Activated CD4-positive, alpha-beta T cell treated with anti-CD3 and anti-CD28 coated beads for 36 hours (primary cell): ENCODE measurements at regions of chr5 and their contacts with region 1.

Region 1: GRCh38 chr5:173615884-173616576 is 420 bp downstream of the BOD1 start:
- DNase-seq: peak; percentile 84
- ATAC-seq: peak; percentile 63
- H3K4me3 Mint-ChIP-seq: peak overlapping the region; percentile 95
- H3K27ac Mint-ChIP-seq: peak overlapping the region; percentile 83
- H3K4me1 Mint-ChIP-seq: peaks cover 56% of the 10 kb centered on the region
- H3K27me3 Mint-ChIP-seq: no peaks in the 10 kb centered on the region

Region 2: GRCh38 chr5:172958331-172959046 is 657.5 kb before region 1 on chr5:
- CTCF ChIA-PET with region 1: no interaction called
- POLR2A ChIA-PET with region 1: no interaction called
- intact Hi-C with region 1: loop called in 1 of 2 experiments (anchors 1 kb)
- DNase-seq: peak; percentile 83
- ATAC-seq: peak; percentile 76
- H3K4me3 Mint-ChIP-seq: peak overlapping the region; percentile 93
- H3K27ac Mint-ChIP-seq: peak overlapping the region; percentile 94
- H3K4me1 Mint-ChIP-seq: peaks cover 17% of the 10 kb centered on the region
- H3K27me3 Mint-ChIP-seq: no peaks in the 10 kb centered on the region

Region 3: DNA sequence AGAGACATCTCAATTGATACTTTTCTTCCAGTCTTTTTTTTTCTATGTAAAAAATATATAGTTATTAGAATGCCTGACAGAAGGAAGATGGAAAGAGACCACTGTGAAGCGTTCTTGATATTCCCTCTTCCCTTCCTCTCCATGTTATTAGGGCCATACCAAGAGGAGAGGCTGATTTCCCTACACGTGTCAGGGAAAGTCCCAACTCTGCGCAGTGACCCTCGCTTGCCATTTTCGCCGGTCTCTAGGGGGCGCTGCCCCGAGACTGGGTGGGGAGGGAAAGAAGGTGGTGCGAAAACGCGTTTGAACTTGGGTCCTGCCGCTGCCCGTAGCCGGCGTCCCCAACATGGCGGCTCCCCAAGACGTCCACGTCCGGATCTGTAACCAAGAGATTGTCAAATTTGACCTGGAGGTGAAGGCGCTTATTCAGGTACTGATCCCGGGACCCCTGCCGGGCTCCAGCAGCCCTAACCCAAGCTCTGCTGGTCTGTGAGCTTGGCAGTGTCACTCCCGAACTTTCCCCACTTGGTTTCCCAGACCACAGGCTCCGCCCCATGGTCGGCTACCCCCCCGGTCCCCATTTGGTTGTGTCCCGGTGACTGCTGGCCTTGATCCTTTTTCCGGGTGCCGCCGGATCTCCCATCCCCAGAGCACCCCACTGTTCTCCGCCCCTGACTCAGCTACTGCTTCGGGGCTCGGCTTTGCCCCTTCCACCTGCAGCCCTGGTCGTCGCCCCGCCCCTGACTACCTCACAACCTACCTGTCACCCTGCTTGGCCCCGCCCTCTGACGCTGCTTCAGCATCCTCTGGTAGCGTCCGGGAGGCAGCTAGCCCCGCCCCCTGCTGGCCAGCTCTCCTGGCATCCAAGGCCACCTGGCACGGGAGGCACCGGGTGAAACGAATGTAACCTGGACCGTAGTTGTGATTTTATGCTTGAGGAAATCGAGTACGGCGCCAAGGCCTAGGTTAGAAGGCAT is 471.5 kb before region 1 on chr5 and contains the start of gene BNIP1:
- CTCF ChIA-PET with region 1: no interaction called
- POLR2A ChIA-PET with region 1: no interaction called
- intact Hi-C with region 1: loop called in 1 of 2 experiments (anchors 1 kb)
- DNase-seq: peak; percentile 98
- ATAC-seq: peak; percentile 94
- H3K4me3 Mint-ChIP-seq: peak within 1 kb of the TSS; percentile 99
- H3K27ac Mint-ChIP-seq: peak within 1 kb of the TSS; percentile 99
- H3K4me1 Mint-ChIP-seq: peaks cover 10% of the 10 kb centered on the region
- H3K27me3 Mint-ChIP-seq: no peaks in the 10 kb centered on the region
- total RNA-seq, gene BNIP1: 24.2 to 26.8 TPM

Region 4: DNA sequence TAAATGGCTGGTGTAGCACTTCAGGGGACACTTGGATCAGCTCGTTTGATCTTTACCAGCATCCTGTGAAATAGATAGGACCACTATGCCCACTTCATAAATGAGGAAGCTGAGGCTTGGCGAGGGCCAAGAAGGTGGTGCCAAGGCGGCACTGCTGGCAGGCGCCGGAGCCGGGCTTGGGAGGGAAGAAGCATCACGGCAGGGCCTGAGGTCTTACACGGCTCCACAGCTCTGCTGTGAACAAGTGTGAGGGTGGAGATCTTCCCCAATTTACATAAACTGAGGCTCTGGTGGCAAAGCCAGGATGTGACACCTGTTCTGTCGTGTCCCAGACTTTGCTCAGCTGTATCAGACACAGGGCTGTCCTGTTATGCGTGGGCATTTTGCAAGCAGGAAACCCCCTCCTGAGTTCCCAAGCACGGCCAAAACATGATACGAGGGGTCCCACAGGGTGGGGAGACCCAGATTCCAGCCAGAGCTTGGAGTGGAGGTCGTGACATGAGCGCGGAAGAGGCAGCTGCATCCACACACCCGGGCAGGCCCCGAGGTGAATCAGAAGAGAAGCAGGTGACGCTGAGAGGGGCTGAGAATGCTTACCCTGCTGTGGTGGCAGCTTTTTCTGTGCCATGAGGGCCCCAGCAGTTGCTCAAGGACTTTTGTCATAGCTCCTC is 117.9 kb after region 1 on chr5:
- CTCF ChIA-PET with region 1: no interaction called
- POLR2A ChIA-PET with region 1: no interaction called
- intact Hi-C with region 1: no loop called
- DNase-seq: no peak
- ATAC-seq: no peak
- H3K4me3 Mint-ChIP-seq: no peak overlapping the region
- H3K27ac Mint-ChIP-seq: no peak overlapping the region
- H3K4me1 Mint-ChIP-seq: no peaks in the 10 kb centered on the region
- H3K27me3 Mint-ChIP-seq: no peaks in the 10 kb centered on the region

Region 5: DNA sequence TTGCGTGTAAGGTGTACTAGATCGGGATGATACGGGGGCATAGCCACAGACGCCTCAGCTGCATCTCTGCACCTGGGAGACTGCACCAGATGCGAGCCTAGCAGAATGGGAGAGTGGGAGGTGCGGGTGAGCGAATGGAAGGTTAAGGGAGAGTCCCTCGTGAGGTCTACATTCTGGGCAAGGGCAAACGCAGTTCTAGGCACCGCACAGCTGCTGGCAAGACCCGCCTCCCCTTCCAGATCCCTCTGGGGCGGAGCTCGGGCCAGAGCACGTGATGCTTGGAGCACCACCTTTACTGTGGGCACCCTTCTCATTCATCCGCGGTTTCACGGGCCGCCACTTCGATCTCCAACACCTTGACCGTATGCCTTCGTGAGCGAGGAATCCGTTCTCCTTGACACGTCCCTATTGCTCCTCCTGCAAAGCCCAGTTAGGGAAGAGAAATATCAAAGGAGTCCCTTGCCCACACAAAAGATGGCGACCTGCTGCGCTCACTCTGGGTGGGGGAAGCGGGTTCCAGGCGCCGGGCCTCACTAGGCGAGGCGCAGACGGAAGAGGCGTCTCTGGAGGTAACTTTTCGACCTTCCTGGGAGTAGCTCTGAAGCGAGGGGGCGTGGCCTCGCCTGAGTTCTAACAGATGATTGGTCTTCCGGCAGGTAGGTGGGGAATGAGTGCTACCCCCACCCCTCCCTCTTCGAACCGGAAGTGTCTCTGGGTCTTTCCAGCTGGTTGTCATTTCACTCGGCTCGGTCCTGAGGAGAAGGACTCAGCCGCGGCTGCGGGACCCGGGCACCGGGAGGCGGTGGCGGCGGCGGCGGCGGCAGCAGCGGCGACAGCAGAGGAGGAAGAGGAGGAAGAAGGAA is 271.8 kb after region 1 on chr5 and contains the start of gene CPEB4:
- CTCF ChIA-PET with region 1: interaction called, 5 read pairs
- POLR2A ChIA-PET with region 1: interaction called, 8 read pairs
- intact Hi-C with region 1: loop called (anchors 1 kb)
- DNase-seq: peak; percentile 98
- ATAC-seq: peak; percentile 96
- H3K4me3 Mint-ChIP-seq: peak within 1 kb of the TSS; percentile 96
- H3K27ac Mint-ChIP-seq: peak within 1 kb of the TSS; percentile 98
- H3K4me1 Mint-ChIP-seq: peaks cover 67% of the 10 kb centered on the region
- H3K27me3 Mint-ChIP-seq: no peaks in the 10 kb centered on the region
- total RNA-seq, gene CPEB4: 5.6 to 8.3 TPM

Region 6: DNA sequence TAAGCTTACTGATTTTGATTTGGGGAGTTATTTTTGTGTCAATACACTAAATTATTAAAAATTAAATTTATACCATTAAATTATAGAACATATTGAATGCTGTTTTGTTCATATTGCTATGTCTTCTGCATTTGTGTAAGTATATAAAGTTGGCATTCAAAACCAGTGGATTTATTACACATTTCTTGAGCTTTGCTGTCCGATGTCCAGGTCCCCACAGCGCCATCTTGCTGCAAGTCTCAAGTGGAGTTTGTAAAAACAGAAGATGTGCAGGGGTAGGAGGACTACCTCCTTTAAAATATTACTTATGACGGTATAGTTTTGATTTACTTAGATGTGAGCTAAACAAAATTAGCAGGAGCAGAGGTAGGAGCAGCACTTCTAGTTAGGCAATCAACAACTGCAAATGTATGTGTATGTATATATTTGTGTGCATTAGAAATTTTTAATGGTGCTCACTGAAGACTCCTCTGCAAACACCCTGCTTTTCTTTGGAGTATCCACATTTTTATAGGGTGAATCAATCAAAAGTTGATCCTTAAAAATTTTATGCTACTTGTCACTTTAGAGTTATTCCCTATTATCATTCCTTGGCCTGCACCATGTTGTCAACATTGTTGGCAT is 309.5 kb after region 1 on chr5:
- CTCF ChIA-PET with region 1: interaction called, 7 read pairs
- POLR2A ChIA-PET with region 1: no interaction called
- intact Hi-C with region 1: loop called (anchors 1 kb)
- DNase-seq: peak; percentile 69
- ATAC-seq: no peak
- H3K4me3 Mint-ChIP-seq: no peak overlapping the region
- H3K27ac Mint-ChIP-seq: no peak overlapping the region
- H3K4me1 Mint-ChIP-seq: peaks cover 26% of the 10 kb centered on the region
- H3K27me3 Mint-ChIP-seq: no peaks in the 10 kb centered on the region

Region 7: DNA sequence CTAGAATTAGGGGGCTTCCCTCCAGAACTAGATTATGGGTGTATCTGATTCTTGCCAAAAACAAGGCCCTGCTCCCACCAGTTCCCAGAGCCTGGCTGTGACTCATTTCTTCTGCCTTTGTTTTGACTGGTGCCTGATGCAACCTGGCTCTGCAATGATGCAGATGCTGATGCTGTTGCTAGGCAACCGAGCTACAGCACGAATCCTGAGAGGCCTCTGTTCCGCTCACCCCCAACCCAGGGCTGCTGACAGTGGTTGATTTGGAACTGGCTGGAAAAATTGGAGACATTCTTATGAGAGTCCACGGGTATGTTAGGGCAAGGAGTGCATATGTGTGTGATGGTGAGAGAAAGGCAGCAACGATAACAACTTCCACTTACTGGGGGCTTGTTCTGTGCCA is 529.8 kb after region 1 on chr5:
- CTCF ChIA-PET with region 1: no interaction called
- POLR2A ChIA-PET with region 1: no interaction called
- intact Hi-C with region 1: no loop called
- DNase-seq: peak; percentile 76
- ATAC-seq: peak; percentile 95
- H3K4me3 Mint-ChIP-seq: no peak overlapping the region
- H3K27ac Mint-ChIP-seq: no peak overlapping the region
- H3K4me1 Mint-ChIP-seq: peaks cover 4% of the 10 kb centered on the region
- H3K27me3 Mint-ChIP-seq: peaks cover 8% of the 10 kb centered on the region

Region 8: DNA sequence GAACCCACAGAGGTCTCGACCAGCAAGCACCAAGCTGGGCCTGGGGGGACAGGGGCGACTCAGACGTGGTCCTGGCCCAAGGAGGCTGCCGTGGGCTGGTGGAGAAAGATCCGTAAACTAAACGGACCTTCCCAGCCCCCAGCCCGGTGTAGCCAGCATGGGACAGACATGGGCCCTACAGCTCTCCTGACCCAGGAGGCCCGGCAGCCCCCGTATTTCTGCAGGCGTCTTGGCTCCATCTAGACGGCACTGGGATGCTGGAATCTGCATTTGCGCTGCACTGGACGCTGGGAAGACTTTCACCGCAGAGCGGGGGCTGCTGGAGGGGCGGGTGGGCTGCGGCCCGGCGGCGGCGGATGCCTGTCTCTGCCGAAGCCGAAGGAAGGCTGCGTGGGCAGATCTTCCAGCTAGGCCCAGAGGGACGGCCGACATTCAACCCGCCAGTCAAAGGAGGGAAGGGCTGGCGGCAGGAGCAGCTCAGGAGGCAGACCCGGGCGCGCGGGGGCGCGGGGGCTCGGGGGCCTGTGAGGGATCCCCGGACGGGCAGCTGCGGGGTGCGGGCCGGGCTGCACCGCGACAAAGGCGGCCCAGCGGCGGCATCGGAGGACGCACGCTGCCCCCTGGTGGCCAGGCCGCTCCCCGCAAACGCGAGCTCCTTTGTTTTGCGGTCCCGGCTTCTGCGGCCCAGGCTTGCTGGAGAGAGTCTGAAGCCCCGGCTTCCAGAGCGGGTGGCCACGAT is 695.7 kb after region 1 on chr5:
- CTCF ChIA-PET with region 1: interaction called, 5 read pairs
- POLR2A ChIA-PET with region 1: interaction called, 3 read pairs
- intact Hi-C with region 1: loop called (anchors 1 to 5 kb)
- DNase-seq: peak; percentile 82
- ATAC-seq: peak; percentile 77
- H3K4me3 Mint-ChIP-seq: no peak overlapping the region
- H3K27ac Mint-ChIP-seq: no peak overlapping the region
- H3K4me1 Mint-ChIP-seq: no peaks in the 10 kb centered on the region
- H3K27me3 Mint-ChIP-seq: peaks cover 27% of the 10 kb centered on the region